ENCODE measurements at regions of chr21 and their contacts with region 1.

Region 1: GRCh38 chr21:38337801-38338200 is 81.0 kb downstream of the KCNJ15 start:
- DNase-seq: no peak
- H3K4me3 Mint-ChIP-seq: no peak overlapping the region
- H3K27ac Mint-ChIP-seq: no peak overlapping the region
- H3K4me1 Mint-ChIP-seq: no peaks in the 10 kb centered on the region
- H3K27me3 Mint-ChIP-seq: no peaks in the 10 kb centered on the region

Region 2: DNA sequence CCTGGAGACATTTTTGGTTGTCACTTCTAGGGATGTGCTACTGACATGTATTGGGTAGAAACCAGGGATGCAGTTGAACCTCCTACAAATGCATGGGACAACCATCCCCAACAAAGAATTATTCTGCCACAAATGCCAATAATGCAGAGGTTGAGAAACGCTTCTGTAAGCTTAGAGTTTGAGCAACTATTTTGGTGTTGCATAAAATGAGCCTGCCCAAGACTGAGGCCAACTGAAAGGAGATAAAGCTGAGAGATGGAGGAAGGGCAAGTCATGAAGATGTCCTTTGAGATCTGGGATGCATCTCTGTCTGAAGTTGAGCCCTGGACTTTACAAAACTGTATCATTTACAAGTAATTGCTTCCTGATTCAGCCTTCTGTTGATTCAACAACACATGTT is 25.9 kb after region 1 on chr21:
- intact Hi-C with region 1: loop called (anchors 2 kb)
- DNase-seq: no peak
- H3K4me3 Mint-ChIP-seq: no peak overlapping the region
- H3K27ac Mint-ChIP-seq: no peak overlapping the region
- H3K4me1 Mint-ChIP-seq: no peaks in the 10 kb centered on the region
- H3K27me3 Mint-ChIP-seq: peaks cover 2% of the 10 kb centered on the region

Region 3: GRCh38 chr21:38486221-38486620 is 148.4 kb after region 1 on chr21:
- intact Hi-C with region 1: no loop called
- DNase-seq: no peak
- H3K4me3 Mint-ChIP-seq: no peak overlapping the region
- H3K27ac Mint-ChIP-seq: no peak overlapping the region
- H3K4me1 Mint-ChIP-seq: no peaks in the 10 kb centered on the region
- H3K27me3 Mint-ChIP-seq: peaks cover 22% of the 10 kb centered on the region